Caco-2 (cell line): ENCODE measurements at regions of chr13 and their contacts with region 1.

Region 1: GRCh38 chr13:50334115-50334778 is 319.0 kb downstream of the KCNRG start:
- DNase-seq: peak; percentile 40 to 45
- H3K4me3 ChIP-seq: no peak overlapping the region
- H3K4me3 Mint-ChIP-seq: peak overlapping the region; percentile 60
- H3K27ac Mint-ChIP-seq: peak overlapping the region; percentile 80
- H3K4me1 ChIP-seq: peaks cover 34% of the 10 kb centered on the region
- H3K4me1 Mint-ChIP-seq: peaks cover 25% of the 10 kb centered on the region
- H3K27me3 ChIP-seq: no peaks in the 10 kb centered on the region
- H3K27me3 Mint-ChIP-seq: no peaks in the 10 kb centered on the region
- CTCF ChIP-seq: no peak

Region 2: GRCh38 chr13:50123862-50124536 is 210.2 kb before region 1 on chr13:
- CTCF ChIA-PET with region 1: interaction called, 4 read pairs
- POLR2A ChIA-PET with region 1: interaction called, 5 read pairs
- intact Hi-C with region 1: loop called (anchors 1 kb)
- DNase-seq: peak; percentile 95 to 98
- H3K4me3 ChIP-seq: peak overlapping the region; percentile 100
- H3K4me3 Mint-ChIP-seq: peak overlapping the region; percentile 95
- H3K27ac Mint-ChIP-seq: peak overlapping the region; percentile 90
- H3K4me1 ChIP-seq: peaks cover 22% of the 10 kb centered on the region
- H3K4me1 Mint-ChIP-seq: peaks cover 26% of the 10 kb centered on the region
- H3K27me3 ChIP-seq: no peaks in the 10 kb centered on the region
- H3K27me3 Mint-ChIP-seq: no peaks in the 10 kb centered on the region
- CTCF ChIP-seq: no peak

Region 3: DNA sequence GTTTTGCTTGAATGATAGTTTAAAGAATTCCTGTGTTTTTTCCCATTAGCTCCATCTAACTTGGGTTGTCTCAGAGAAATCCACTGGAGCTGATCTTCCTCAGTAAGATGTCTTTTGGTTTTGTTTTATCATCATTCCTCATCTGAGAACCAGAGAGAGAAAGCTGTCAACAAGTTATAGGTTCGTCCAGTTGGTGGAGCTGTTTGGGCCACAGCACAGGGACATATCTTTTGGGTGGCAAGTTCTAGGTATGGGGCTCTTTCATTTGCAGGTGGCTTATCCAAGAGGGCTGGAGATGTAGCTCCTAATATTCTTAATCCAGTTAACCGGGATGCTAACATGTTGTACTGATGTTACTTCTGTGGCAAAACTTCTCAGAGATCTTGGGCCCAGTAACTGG is 144.8 kb before region 1 on chr13:
- CTCF ChIA-PET with region 1: no interaction called
- POLR2A ChIA-PET with region 1: no interaction called
- intact Hi-C with region 1: loop called (anchors 5 kb)
- DNase-seq: no peak
- H3K4me3 ChIP-seq: no peak overlapping the region
- H3K4me3 Mint-ChIP-seq: no peak overlapping the region
- H3K27ac Mint-ChIP-seq: no peak overlapping the region
- H3K4me1 ChIP-seq: peaks cover 19% of the 10 kb centered on the region
- H3K4me1 Mint-ChIP-seq: peaks cover 7% of the 10 kb centered on the region
- H3K27me3 ChIP-seq: no peaks in the 10 kb centered on the region
- H3K27me3 Mint-ChIP-seq: no peaks in the 10 kb centered on the region
- CTCF ChIP-seq: no peak

Region 4: DNA sequence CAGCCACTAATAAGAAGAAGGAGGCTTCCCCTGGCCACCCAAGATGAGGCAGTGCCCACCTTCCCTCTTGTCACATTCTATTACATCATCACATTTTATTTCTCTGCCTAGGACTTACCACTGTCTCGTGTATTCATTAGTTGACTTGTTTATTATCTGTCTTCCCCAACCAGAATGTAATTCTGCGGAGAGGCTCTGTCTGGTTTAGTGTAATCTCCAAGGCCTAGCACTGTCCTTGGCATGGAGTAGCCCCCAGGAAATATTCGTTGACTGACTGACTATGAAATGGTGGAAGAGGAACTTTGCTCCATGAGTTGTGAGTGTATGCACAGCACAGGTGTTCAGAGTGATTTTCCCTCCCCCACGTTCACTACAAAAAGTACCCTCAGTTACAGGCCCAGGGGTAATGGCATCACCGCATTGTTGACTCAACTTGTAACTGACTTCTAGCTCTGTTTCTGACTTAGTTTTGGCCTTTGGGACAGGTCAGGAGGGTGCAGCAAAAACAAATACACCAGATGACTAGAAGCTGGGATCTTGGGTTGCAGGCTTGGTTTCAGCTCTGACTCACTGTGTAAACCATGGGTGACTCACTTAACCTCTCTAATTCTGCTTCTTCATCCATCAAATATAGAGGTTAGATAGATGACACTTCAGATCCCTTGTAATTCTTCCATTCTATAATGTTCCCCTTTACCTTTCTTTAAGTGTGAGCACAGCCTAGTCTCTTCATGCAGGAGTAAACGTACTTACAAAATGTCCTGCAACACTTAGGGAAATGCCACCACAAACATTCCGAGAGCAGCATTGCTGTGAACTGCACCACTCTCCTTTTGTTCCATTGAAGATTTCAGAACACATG is 89.3 kb before region 1 on chr13:
- CTCF ChIA-PET with region 1: no interaction called
- POLR2A ChIA-PET with region 1: no interaction called
- intact Hi-C with region 1: loop called (anchors 1 kb)
- DNase-seq: peak; percentile 78 to 85
- H3K4me3 ChIP-seq: no peak overlapping the region
- H3K4me3 Mint-ChIP-seq: no peak overlapping the region
- H3K27ac Mint-ChIP-seq: peak overlapping the region; percentile 78
- H3K4me1 ChIP-seq: peaks cover 24% of the 10 kb centered on the region
- H3K4me1 Mint-ChIP-seq: peaks cover 34% of the 10 kb centered on the region
- H3K27me3 ChIP-seq: no peaks in the 10 kb centered on the region
- H3K27me3 Mint-ChIP-seq: no peaks in the 10 kb centered on the region
- CTCF ChIP-seq: no peak

Region 5: GRCh38 chr13:50319635-50320255 is 14.5 kb before region 1 on chr13:
- CTCF ChIA-PET with region 1: no interaction called
- POLR2A ChIA-PET with region 1: no interaction called
- intact Hi-C with region 1: loop called (anchors 1 kb)
- DNase-seq: no peak
- H3K4me3 ChIP-seq: no peak overlapping the region
- H3K4me3 Mint-ChIP-seq: peak overlapping the region; percentile 22
- H3K27ac Mint-ChIP-seq: peak overlapping the region; percentile 91
- H3K4me1 ChIP-seq: peaks cover 25% of the 10 kb centered on the region
- H3K4me1 Mint-ChIP-seq: peaks cover 25% of the 10 kb centered on the region
- H3K27me3 ChIP-seq: no peaks in the 10 kb centered on the region
- H3K27me3 Mint-ChIP-seq: no peaks in the 10 kb centered on the region
- CTCF ChIP-seq: no peak

Region 6: DNA sequence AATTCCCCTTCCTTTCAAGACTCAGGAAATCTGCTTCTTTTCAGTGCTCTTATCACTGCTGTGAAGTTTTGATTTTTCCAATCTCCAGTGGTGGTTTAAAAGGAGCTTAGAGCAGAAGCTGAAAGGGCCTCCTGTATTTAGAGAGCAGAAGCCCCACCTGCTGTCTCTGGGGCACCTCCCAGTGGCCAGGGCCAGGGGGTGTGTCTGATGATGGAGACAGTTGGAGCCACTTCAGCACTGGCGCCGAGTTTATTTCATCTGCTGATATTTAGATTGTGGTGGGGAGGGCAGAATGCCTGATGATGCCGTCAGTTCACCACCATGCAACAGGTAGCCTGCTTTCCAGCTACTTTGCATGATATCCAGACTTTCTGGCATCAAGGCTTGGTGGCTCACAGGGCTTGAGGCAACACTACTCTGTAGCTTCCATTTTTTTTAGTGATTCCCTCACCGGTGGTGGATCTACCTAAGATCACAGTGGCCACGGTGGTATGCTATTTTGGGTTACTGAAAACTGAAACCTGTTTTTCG is 52.9 kb after region 1 on chr13:
- CTCF ChIA-PET with region 1: interaction called, 3 read pairs
- POLR2A ChIA-PET with region 1: no interaction called
- intact Hi-C with region 1: loop called (anchors 2 kb)
- DNase-seq: peak; percentile 53 to 62
- H3K4me3 ChIP-seq: no peak overlapping the region
- H3K4me3 Mint-ChIP-seq: no peak overlapping the region
- H3K27ac Mint-ChIP-seq: no peak overlapping the region
- H3K4me1 ChIP-seq: no peaks in the 10 kb centered on the region
- H3K4me1 Mint-ChIP-seq: peaks cover 9% of the 10 kb centered on the region
- H3K27me3 ChIP-seq: no peaks in the 10 kb centered on the region
- H3K27me3 Mint-ChIP-seq: no peaks in the 10 kb centered on the region
- CTCF ChIP-seq: peak in 1 of 2 experiments; percentile 71

Region 7: DNA sequence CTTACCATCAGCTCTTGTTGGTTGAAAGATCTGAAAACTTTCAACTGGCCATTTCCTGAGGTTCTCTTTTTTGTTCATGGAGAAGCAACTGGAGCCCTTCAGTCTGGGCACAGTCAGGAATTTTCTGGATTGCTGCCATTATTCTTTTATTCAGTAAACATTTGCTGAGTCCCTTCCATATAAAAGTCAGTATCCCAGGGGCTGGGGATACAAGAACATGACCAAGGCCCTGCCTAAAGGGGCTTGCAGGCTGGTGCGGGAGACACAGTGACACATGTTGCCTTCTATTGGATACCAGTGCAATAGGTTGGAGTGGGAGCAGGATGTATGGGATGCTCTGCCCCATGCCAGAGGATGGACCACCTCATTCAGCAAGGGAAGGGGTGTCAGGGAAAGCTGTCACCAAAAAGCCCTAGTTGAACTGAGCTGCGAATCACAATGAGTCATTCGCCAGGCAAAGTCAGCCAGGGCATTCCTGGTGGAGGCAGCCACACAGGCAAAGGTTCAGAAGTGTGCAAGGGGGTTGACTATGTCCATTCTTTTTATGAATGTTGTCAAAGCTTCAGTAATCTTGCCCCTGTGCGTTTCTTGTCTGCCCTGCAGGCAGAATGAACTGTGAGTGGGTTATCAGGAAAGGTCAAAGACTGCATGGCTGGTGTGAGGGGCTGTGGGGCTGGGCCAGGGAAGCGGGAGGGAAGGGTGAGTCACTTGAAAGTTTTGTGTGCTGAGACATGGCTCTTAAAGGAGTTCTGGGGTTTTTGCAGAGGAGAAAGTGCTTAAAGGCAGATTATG is 76.9 kb after region 1 on chr13:
- CTCF ChIA-PET with region 1: no interaction called
- POLR2A ChIA-PET with region 1: no interaction called
- intact Hi-C with region 1: loop called (anchors 1 kb)
- DNase-seq: peak; percentile 81 to 90
- H3K4me3 ChIP-seq: no peak overlapping the region
- H3K4me3 Mint-ChIP-seq: no peak overlapping the region
- H3K27ac Mint-ChIP-seq: peak overlapping the region; percentile 65
- H3K4me1 ChIP-seq: peaks cover 28% of the 10 kb centered on the region
- H3K4me1 Mint-ChIP-seq: peaks cover 17% of the 10 kb centered on the region
- H3K27me3 ChIP-seq: no peaks in the 10 kb centered on the region
- H3K27me3 Mint-ChIP-seq: no peaks in the 10 kb centered on the region
- CTCF ChIP-seq: no peak